Endothelial cell of umbilical vein (primary cell): ENCODE measurements at regions of chr2 and their contacts with region 1.

Region 1: DNA sequence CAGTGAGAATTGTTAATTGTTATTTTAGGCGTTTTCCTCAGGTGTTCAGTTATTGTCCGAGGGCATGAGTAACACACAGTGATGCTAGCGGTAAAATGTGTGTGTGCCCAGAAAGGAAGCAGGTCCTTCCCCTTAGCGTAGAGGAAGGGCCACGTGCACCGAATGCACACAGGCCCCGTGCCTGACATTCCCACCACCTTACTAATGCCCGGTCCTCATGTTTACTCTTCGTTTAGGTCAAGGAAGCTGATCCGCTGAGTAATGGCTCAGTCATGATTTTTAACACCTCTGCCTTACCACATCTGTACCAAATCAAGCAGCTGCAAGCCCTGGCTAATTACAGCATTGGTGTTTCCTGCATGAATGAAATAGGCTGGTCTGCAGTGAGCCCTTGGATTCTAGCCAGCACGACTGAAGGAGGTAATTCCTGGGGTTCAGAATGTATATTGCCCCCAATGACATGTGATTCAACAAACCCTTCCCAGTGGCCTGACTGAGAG is 76.7 kb downstream of the MERTK start:
- DNase-seq: peak; percentile 99
- H3K4me3 ChIP-seq: no peak overlapping the region
- H3K27ac ChIP-seq: peak overlapping the region; percentile 96
- H3K4me1 ChIP-seq: peaks cover 38% of the 10 kb centered on the region
- H3K27me3 ChIP-seq: no peaks in the 10 kb centered on the region
- CTCF ChIP-seq: no peak
- POLR2A ChIP-seq: no peak

Region 2: DNA sequence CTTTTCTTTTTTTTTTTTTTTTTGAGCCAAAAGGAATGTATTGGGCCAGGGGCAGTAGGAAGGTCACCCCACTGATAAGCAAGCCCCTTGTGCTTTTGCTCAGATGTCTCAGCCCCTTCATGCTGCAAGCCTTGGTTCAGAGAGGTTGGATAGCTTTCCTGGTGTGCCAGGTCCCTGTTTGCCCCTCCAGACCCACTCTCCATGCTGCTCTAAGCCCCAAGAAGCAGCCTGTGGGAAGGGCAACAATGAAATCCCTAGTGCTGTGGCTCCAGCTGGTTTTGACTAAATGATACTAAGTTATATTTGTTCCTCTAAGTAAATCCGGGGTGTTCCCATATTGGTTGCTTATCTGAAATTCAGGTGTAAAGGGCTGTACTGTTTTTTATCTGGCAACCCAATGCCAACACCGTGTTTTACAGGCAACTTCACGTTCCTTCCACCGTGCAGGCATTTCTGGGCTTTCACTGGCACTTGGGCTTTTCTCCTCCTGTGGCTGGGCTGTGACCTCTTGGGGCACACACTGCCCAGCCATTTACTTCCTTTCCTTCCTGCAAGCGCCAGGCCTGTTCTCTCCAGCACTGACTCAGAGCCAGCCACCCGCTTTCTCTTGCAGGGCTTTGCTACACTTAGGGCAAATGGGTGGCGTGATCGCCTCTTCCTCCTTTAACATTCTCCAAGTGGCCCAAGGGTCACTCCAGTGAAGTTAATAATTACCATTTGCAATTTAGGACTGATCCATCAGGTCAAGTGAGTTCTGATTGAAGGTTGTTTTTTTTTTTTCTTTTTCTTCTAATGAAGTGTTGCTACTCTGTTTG is 55.1 kb before region 1 on chr2:
- CTCF ChIA-PET with region 1: no interaction called
- POLR2A ChIA-PET with region 1: no interaction called
- dilution Hi-C with region 1: no loop called
- intact Hi-C with region 1: loop called (anchors 1 kb)
- DNase-seq: peak; percentile 89
- H3K4me3 ChIP-seq: no peak overlapping the region
- H3K27ac ChIP-seq: peak overlapping the region; percentile 85
- H3K4me1 ChIP-seq: peaks cover 31% of the 10 kb centered on the region
- H3K27me3 ChIP-seq: no peaks in the 10 kb centered on the region
- CTCF ChIP-seq: peak in 1 of 2 donors; percentile 3
- POLR2A ChIP-seq: peak; percentile 41

Region 3: DNA sequence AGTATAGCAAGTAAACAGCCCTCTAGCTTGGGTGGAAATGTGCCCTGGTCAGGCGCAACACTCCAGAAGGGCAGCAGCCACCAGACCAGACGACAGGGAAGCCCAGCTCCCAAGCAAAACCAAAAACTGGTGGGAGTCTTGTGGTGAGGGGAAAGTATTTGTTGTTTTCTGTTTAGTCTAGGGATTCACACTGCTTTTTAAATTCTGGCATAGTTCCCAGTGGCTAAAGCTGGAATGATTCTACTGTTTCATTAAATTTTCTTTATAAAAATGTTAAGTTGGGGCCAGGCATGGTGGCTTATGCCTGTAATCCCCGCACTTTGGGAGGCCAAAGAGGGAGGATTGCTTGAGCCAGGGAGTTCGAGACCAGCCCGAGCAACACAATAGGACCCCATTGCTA is 38.2 kb before region 1 on chr2:
- CTCF ChIA-PET with region 1: interaction called, 3 read pairs
- POLR2A ChIA-PET with region 1: no interaction called
- dilution Hi-C with region 1: no loop called
- intact Hi-C with region 1: loop called (anchors 1 kb)
- DNase-seq: peak; percentile 41
- H3K4me3 ChIP-seq: no peak overlapping the region
- H3K27ac ChIP-seq: peak overlapping the region; percentile 76
- H3K4me1 ChIP-seq: peaks cover 30% of the 10 kb centered on the region
- H3K27me3 ChIP-seq: no peaks in the 10 kb centered on the region
- CTCF ChIP-seq: no peak
- POLR2A ChIP-seq: no peak

Region 4: GRCh38 chr2:111958901-111959300 is 16.2 kb before region 1 on chr2:
- CTCF ChIA-PET with region 1: interaction called, 3 read pairs
- POLR2A ChIA-PET with region 1: interaction called, 11 read pairs
- dilution Hi-C with region 1: no loop called
- intact Hi-C with region 1: no loop called
- DNase-seq: no peak
- H3K4me3 ChIP-seq: no peak overlapping the region
- H3K27ac ChIP-seq: no peak overlapping the region
- H3K4me1 ChIP-seq: peaks cover 9% of the 10 kb centered on the region
- H3K27me3 ChIP-seq: no peaks in the 10 kb centered on the region
- CTCF ChIP-seq: peak in 1 of 2 donors; percentile 6
- POLR2A ChIP-seq: no peak

Region 5: DNA sequence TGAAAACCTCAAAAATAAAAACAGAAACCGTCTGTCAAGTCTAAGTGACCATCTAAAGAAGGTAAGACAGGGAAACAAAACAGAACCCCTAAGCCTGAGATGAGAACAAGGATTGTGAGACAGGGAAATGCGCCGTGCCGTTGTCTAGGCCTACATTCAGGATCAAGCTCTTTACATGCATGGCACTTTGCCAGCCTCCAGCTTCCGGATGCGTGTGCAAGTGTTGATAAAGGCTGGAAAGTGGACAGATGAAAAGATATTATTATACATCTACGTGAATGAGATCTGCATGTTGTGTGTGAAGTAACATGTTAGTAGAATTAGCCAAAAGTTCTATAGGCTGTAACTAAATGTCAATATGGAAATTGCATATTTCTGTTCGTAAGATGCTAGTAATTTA is 51.4 kb after region 1 on chr2:
- CTCF ChIA-PET with region 1: no interaction called
- POLR2A ChIA-PET with region 1: no interaction called
- dilution Hi-C with region 1: no loop called
- intact Hi-C with region 1: loop called (anchors 1 kb)
- DNase-seq: peak; percentile 94
- H3K4me3 ChIP-seq: no peak overlapping the region
- H3K27ac ChIP-seq: peak overlapping the region; percentile 86
- H3K4me1 ChIP-seq: peaks cover 28% of the 10 kb centered on the region
- H3K27me3 ChIP-seq: no peaks in the 10 kb centered on the region
- CTCF ChIP-seq: no peak
- POLR2A ChIP-seq: peak; percentile 31

Region 6: GRCh38 chr2:112048887-112049286 is 73.8 kb after region 1 on chr2:
- CTCF ChIA-PET with region 1: no interaction called
- POLR2A ChIA-PET with region 1: no interaction called
- dilution Hi-C with region 1: no loop called
- intact Hi-C with region 1: loop called (anchors 2 kb)
- DNase-seq: peak; percentile 84
- H3K4me3 ChIP-seq: no peak overlapping the region
- H3K27ac ChIP-seq: no peak overlapping the region
- H3K4me1 ChIP-seq: peaks cover 5% of the 10 kb centered on the region
- H3K27me3 ChIP-seq: peaks cover 0 to 1% of the 10 kb centered on the region in 2 experiments
- CTCF ChIP-seq: peak; percentile 48 to 69
- POLR2A ChIP-seq: no peak

Region 7: DNA sequence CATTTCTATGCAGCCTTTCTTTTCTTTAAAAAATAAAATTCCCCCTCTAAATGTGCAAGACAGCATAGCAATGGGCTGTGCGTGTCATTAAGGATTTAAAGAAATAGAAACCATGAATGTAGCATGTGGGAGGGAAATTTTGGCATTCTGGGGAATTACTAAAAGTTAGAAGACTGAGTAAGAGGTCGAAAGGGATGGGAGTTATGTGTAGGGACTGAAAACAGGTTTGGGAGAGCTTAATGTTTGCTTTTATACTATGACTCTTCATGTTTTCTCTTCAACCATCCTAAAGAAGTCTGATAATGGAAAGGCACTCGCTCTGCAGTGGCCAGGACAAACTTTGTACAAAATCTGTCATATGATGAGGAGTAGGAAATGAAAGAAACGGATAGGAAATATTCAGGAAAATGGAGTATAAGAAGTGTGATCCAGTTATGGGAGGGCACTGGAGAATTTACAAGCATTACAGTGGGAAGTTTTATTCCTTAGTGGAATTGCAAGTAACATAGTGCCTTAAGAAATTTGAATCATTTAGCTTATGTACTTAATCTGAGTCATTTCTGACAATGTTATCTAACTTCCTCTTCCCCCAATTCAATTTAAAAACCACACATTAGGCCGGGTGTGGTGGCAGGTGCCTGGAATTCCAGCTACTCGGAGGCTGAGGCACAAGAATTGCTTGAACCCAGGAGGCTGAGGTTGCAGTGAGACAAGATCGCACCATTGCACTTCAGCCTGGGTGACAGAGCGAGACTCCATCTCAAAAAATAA is 100.6 kb after region 1 on chr2:
- CTCF ChIA-PET with region 1: no interaction called
- POLR2A ChIA-PET with region 1: no interaction called
- dilution Hi-C with region 1: no loop called
- intact Hi-C with region 1: no loop called
- DNase-seq: peak; percentile 86
- H3K4me3 ChIP-seq: peak overlapping the region in 2 of 3 experiments; percentile 26 to 66
- H3K27ac ChIP-seq: peak overlapping the region; percentile 98
- H3K4me1 ChIP-seq: peaks cover 34% of the 10 kb centered on the region
- H3K27me3 ChIP-seq: no peaks in the 10 kb centered on the region
- CTCF ChIP-seq: no peak
- POLR2A ChIP-seq: peak; percentile 40